Activated CD4-positive, alpha-beta T cell treated with anti-CD3 and anti-CD28 coated beads, Interleukin-2, amount 10 ng/mL, durations not matched to agents 24 days and 14 days (primary cell): ENCODE measurements at regions of chr7 and their contacts with region 1.

Region 1: DNA sequence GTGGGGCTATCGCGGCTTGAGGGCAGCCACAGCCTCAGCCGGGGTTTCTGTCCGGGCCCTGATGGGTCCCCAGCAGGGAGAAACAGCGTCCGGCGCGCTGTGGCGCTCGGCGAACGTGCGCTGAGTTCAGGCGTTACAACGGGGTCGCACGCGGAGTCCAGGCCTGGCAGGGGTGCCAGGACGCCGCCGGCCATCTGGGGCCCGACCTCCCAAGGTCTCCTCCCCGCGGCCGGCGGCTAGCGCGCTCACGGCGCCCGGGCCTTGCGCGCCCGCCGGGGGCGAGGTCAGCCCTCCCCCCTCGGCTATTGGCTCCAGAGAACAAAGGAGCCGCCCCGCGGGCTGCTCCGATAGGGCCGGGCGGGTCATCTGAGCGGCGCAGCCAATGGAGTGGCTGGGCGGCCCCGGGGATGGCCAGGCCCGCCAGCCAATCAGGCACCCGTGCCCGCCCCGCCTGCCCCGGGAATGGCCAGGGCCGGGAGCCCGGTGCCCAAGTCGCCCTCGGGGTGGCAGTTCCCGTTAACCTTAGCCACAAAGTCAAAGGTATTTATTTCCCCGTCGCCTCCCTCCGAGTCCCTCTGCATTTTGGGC is at the start of gene ZNF775:
- DNase-seq: peak; percentile 98
- H3K4me3 Mint-ChIP-seq: peak within 1 kb of the TSS; percentile 96
- H3K27ac Mint-ChIP-seq: peak within 1 kb of the TSS; percentile 80
- H3K4me1 Mint-ChIP-seq: peaks cover 44% of the 10 kb centered on the region
- H3K27me3 Mint-ChIP-seq: no peaks in the 10 kb centered on the region
- total RNA-seq, gene ZNF775: 4.2 and 5.5 TPM in 2 replicates

Region 2: DNA sequence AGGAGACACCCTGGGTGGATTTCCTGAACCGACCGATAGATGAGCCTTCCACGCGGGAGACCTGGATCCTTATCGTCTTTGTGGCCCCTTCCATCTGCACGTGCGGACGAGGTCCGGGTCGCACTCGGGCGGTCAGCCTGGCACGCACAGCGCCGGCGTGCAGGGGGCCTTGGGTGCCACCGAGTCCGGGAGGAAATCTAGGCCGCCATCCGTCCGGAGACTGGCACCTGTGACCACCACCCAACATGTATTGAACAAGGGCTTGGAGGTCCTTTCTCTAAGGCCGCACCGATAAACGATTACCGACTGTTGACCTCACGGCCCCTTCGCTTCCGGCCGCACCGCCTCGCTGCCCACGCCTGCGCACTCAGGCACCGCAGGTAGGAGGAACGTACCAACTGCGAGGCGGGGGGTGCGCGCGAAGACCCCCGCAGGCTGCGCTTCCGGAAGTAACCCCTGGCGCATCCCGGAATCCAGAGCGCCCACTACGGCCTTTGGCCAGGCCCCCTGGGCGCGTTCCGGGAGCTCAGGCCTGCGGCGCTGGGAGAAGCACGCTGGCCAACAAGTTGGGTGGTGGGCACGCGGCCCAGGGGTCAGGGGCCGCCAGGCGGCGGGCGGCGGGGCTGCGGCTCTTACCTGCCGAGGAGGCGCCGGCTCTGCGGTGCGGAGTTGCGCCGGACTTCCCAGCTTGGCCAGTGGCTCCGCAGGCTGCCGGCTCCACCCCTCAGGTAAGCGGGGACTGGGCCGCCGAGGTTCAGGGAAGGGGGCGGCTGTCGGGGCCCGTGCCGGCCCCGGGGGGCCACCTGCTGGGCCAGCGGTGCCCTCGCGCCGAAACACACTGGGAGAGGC is 55.9 kb before region 1 on chr7 and contains the starts of genes ACTR3C and LRRC61:
- intact Hi-C with region 1: loop called (anchors 1 kb)
- DNase-seq: peak; percentile 91
- H3K4me3 Mint-ChIP-seq: peak within 1 kb of the TSS; percentile 99
- H3K27ac Mint-ChIP-seq: peak within 1 kb of the TSS; percentile 100
- H3K4me1 Mint-ChIP-seq: peaks cover 49% of the 10 kb centered on the region
- H3K27me3 Mint-ChIP-seq: no peaks in the 10 kb centered on the region
- total RNA-seq, gene ACTR3C: 7.9 and 11.7 TPM in 2 replicates
- total RNA-seq, gene LRRC61: 26.8 and 27.5 TPM in 2 replicates

Region 3: DNA sequence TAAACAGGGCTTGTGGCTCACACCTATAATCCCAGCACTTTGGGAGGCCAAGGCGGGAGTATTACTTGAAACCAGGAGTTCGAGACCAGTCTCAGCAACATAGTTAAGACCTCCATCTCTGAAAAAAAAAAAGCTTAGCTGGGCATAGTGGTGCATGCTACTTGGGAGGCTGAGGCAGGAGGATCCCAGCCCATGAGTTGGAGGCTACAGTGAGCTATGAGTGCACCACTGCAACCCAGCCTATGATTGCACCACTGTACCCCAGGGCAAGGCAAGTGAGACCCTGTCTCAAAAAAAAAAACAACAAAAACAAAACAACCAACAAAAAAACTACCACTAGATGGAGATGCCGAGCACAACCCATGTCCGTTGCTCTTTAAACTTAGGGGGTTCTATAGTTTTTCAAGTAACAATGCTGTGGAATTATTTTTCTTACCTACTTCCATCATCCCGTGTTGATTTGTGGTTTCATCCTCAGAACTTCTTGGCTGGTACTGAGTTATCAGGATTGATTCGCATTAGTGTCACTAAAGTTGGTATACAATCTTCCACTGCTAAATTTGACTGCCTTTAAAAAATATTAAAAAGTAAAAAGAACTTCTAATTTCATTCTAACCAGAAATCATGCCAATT is 22.6 kb before region 1 on chr7:
- intact Hi-C with region 1: loop called (anchors 1 kb)
- DNase-seq: peak; percentile 79
- H3K4me3 Mint-ChIP-seq: no peak overlapping the region
- H3K27ac Mint-ChIP-seq: peak overlapping the region; percentile 41
- H3K4me1 Mint-ChIP-seq: peaks cover 39% of the 10 kb centered on the region
- H3K27me3 Mint-ChIP-seq: peaks cover 3% of the 10 kb centered on the region

Region 4: GRCh38 chr7:150368096-150368883 is 10.7 kb before region 1 on chr7 and contains the start of gene REPIN1:
- intact Hi-C with region 1: loop called (anchors 1 kb)
- DNase-seq: peak; percentile 94
- H3K4me3 Mint-ChIP-seq: peak within 1 kb of the TSS; percentile 98
- H3K27ac Mint-ChIP-seq: peak within 1 kb of the TSS; percentile 97
- H3K4me1 Mint-ChIP-seq: peaks cover 40% of the 10 kb centered on the region
- H3K27me3 Mint-ChIP-seq: no peaks in the 10 kb centered on the region
- total RNA-seq, gene REPIN1: 73.6 and 79.7 TPM in 2 replicates

Region 5: DNA sequence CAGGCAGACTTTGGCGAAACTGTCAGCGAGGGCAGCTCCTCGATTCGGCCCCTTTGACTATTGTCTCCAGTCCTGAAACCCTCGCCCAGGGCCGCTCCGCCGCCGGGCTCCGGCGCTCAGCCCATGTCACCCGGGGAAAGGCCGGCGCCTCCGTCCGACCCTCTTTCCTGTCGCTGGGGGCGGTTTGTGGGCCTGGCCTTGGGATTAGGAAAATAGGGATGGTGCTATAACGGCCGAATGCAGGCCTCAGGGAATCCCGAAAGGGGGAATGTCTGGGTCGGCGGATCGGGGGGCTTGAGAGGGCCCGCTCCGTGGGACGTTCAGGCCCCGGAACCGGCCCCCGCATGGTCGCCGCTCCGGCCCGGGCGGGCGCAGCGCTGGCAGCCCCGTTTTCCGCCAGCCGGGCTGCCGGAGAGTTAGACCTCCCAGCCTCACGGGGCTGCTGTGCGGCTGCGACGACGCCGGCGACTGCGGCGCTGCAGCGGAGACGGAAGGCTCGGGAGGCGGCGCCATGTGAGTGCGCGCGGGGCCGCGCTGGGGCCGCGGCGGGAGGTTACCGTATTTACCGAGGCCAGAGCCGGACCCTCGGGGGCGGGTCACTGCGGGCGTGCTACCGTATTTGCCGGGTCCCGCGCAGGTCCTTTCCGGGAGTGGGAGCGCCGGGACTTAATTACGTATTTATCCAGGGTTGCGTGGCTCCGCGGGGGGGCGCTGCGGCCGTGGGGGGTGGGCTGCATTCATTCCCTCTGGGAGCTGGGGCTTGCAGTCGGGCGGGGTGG is 26.0 kb after region 1 on chr7:
- intact Hi-C with region 1: loop called (anchors 1 kb)
- DNase-seq: peak; percentile 95
- H3K4me3 Mint-ChIP-seq: peak overlapping the region; percentile 87
- H3K27ac Mint-ChIP-seq: peak overlapping the region; percentile 89
- H3K4me1 Mint-ChIP-seq: peaks cover 34% of the 10 kb centered on the region
- H3K27me3 Mint-ChIP-seq: no peaks in the 10 kb centered on the region

Region 6: GRCh38 chr7:150420987-150421674 is 42.2 kb after region 1 on chr7:
- intact Hi-C with region 1: loop called (anchors 5 kb)
- DNase-seq: peak; percentile 96
- H3K4me3 Mint-ChIP-seq: peak overlapping the region; percentile 39
- H3K27ac Mint-ChIP-seq: no peak overlapping the region
- H3K4me1 Mint-ChIP-seq: peaks cover 5% of the 10 kb centered on the region
- H3K27me3 Mint-ChIP-seq: peaks cover 2% of the 10 kb centered on the region

Region 7: GRCh38 chr7:150466477-150466876 is 87.5 kb after region 1 on chr7:
- intact Hi-C with region 1: no loop called
- DNase-seq: no peak
- H3K4me3 Mint-ChIP-seq: no peak overlapping the region
- H3K27ac Mint-ChIP-seq: no peak overlapping the region
- H3K4me1 Mint-ChIP-seq: peaks cover 58% of the 10 kb centered on the region
- H3K27me3 Mint-ChIP-seq: no peaks in the 10 kb centered on the region

Region 8: GRCh38 chr7:151080522-151081169 is 701.7 kb after region 1 on chr7 and contains the start of gene FASTK:
- intact Hi-C with region 1: loop called (anchors 10 kb)
- DNase-seq: peak; percentile 97
- H3K4me3 Mint-ChIP-seq: peak within 1 kb of the TSS; percentile 95
- H3K27ac Mint-ChIP-seq: peak within 1 kb of the TSS; percentile 82
- H3K4me1 Mint-ChIP-seq: peaks cover 30% of the 10 kb centered on the region
- H3K27me3 Mint-ChIP-seq: peaks cover 9% of the 10 kb centered on the region
- total RNA-seq, gene FASTK: 90.8 and 92.3 TPM in 2 replicates